ENCODE measurements at regions of chr5 and their contacts with region 1.

Region 1: DNA sequence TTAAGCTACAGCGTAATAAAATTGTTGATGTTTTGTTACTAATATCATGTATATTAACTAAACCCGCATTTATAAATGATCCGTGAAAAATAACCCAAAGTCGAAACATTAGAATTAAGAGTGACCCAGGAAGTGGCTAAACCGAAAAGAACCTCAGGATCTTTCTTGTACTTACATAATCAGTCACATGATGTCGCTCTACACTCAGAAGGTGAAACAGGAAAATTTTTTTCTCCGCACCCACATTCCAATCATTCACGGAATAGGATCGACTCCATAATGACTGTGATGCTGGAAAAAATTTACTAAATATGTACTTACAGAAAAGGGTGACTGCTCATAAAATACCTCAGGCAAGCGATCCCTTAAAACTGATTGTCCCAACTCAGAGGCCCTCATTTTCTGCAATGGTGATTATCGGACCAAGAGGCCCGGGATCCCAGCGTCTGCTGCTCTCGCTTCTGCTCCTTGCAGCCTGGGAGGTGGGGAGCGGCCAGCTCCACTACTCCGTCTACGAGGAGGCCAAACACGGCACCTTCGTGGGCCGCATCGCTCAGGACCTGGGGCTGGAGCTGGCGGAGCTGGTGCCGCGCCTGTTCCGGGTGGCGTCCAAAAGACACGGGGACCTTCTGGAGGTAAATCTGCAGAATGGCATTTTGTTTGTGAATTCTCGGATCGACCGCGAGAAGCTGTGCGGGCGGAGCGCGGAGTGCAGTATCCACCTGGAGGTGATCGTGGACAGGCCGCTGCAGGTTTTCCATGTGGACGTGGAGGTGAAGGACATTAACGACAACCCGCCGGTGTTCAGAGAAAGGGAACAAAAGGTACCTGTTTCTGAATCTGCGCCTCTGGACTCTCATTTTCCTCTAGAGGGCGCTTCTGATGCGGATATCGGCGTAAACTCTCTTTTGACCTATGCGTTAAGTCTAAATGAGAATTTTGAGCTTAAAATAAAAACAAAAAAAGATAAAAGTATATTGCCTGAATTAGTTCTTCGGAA is at the start of gene PCDHA12:
- DNase-seq: peak; percentile 76
- H3K4me3 Mint-ChIP-seq: peak within 1 kb of the TSS; percentile 86
- H3K27ac Mint-ChIP-seq: peak within 1 kb of the TSS; percentile 92
- H3K4me1 Mint-ChIP-seq: peaks cover 4% of the 10 kb centered on the region
- H3K27me3 Mint-ChIP-seq: no peaks in the 10 kb centered on the region
- CTCF ChIP-seq: peak; percentile 68
- total RNA-seq, gene PCDHA12: 6.1 and 9.6 TPM in 2 replicates

Region 2: GRCh38 chr5:140953234-140953633 is 77.9 kb after region 1 on chr5:
- CTCF ChIA-PET with region 1: interaction called, 3 read pairs
- POLR2A ChIA-PET with region 1: interaction called, 13 read pairs
- intact Hi-C with region 1: no loop called
- DNase-seq: no peak
- H3K4me3 Mint-ChIP-seq: no peak overlapping the region
- H3K27ac Mint-ChIP-seq: no peak overlapping the region
- H3K4me1 Mint-ChIP-seq: peaks cover 20% of the 10 kb centered on the region
- H3K27me3 Mint-ChIP-seq: no peaks in the 10 kb centered on the region
- CTCF ChIP-seq: no peak

Region 3: GRCh38 chr5:140966293-140967225 is 91.2 kb after region 1 on chr5 and contains the start of gene PCDHAC2:
- CTCF ChIA-PET with region 1: interaction called, 13 read pairs
- POLR2A ChIA-PET with region 1: interaction called, 5 read pairs
- intact Hi-C with region 1: no loop called
- DNase-seq: peak; percentile 55
- H3K4me3 Mint-ChIP-seq: peak within 1 kb of the TSS; percentile 94
- H3K27ac Mint-ChIP-seq: peak within 1 kb of the TSS; percentile 90
- H3K4me1 Mint-ChIP-seq: peaks cover 24% of the 10 kb centered on the region
- H3K27me3 Mint-ChIP-seq: no peaks in the 10 kb centered on the region
- CTCF ChIP-seq: no peak
- total RNA-seq, gene PCDHAC2: 9.3 and 12.3 TPM in 2 replicates

Region 4: GRCh38 chr5:141017943-141018342 is 142.6 kb after region 1 on chr5:
- CTCF ChIA-PET with region 1: interaction called, 10 read pairs
- POLR2A ChIA-PET with region 1: interaction called, 3 read pairs
- intact Hi-C with region 1: no loop called
- DNase-seq: no peak
- H3K4me3 Mint-ChIP-seq: no peak overlapping the region
- H3K27ac Mint-ChIP-seq: no peak overlapping the region
- H3K4me1 Mint-ChIP-seq: peaks cover 5% of the 10 kb centered on the region
- H3K27me3 Mint-ChIP-seq: no peaks in the 10 kb centered on the region
- CTCF ChIP-seq: no peak

Region 5: DNA sequence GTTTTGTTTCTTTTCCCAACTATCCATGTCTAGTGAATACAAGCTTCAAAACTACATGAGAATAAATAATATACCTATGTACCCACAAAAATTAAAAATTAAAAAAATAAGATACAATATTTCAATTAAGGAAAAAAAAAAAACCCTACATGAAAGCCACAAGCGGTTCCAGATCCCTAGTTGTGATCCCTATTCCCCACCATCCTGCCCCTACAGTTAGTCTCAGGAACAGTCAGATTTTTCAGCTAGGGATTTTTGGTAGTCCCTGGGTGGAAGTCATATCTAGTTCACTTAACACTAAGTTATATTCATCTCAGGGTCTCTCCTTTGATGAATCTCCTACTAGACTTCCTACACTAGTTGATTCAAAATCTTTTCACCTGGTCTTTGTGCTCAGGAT is 157.3 kb after region 1 on chr5:
- CTCF ChIA-PET with region 1: interaction called, 45 read pairs
- POLR2A ChIA-PET with region 1: interaction called, 17 read pairs
- intact Hi-C with region 1: no loop called
- DNase-seq: no peak
- H3K4me3 Mint-ChIP-seq: no peak overlapping the region
- H3K27ac Mint-ChIP-seq: no peak overlapping the region
- H3K4me1 Mint-ChIP-seq: no peaks in the 10 kb centered on the region
- H3K27me3 Mint-ChIP-seq: no peaks in the 10 kb centered on the region
- CTCF ChIP-seq: no peak

Measured in MCF 10A (cell line).